ENCODE measurements at regions of chr11 and their contacts with region 1.

Region 1: GRCh38 chr11:128831174-128832120 is 35.6 kb downstream of the KCNJ1 start:
- DNase-seq: peak; percentile 83
- H3K4me3 ChIP-seq: peak overlapping the region in 1 of 4 donors; percentile 9
- H3K27ac ChIP-seq: peak overlapping the region in 1 of 4 donors; percentile 7
- H3K4me1 ChIP-seq: peaks cover 0 to 6% (median 0%) of the 10 kb centered on the region in 4 donors
- H3K27me3 ChIP-seq: no peaks in the 10 kb centered on the region
- CTCF ChIP-seq: peak; percentile 80 to 92 (median 89)
- EP300 ChIP-seq: no peak
- POLR2A ChIP-seq: no peak

Region 2: DNA sequence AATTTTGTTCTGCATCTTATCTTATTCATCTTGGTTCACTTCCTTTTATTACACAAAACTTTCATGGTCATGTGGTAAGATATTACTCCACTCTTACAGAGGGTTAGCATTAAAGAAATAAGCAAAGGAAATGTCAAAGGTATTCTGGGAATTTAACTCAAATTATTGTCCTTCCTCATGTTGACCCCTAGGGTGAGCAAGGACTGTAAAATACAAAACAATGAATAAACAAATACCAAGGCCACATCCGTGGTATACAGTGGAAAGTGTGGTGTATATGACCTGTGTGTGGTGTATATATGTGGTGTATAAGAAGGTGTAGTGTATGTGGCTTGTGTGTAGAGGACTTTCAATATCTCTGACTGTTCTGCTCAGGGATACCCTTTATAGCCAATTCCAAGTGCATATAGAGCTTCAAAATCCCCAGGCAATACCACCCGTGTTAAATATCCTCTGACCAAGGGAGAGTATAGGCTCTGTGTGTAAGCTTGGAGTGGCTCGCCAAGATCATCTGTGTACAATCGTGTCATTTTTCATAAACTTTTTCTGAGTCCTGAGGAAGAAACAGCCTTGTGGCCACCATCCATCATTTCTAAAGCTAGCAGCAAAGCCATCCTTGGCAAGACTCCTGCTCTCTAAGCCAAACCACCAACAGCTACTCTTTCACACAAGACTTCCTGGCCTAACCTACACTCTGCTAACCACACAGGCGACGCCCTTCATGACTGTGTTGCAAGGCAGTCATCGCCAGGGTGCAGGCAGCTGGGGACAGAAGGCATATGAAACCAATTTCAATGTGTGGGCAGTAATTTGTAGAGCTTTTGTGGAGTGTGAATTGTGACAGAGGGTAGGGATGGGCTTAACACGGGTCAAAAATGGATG is 792.1 kb before region 1 on chr11:
- in situ Hi-C with region 1: loop called (anchors 10 to 25 kb)
- intact Hi-C with region 1: no loop called
- DNase-seq: peak; percentile 48
- H3K4me3 ChIP-seq: no peak overlapping the region
- H3K27ac ChIP-seq: no peak overlapping the region
- H3K4me1 ChIP-seq: peaks cover 0 to 8% (median 2%) of the 10 kb centered on the region in 4 donors
- H3K27me3 ChIP-seq: no peaks in the 10 kb centered on the region
- CTCF ChIP-seq: no peak
- EP300 ChIP-seq: no peak
- POLR2A ChIP-seq: no peak

Region 3: GRCh38 chr11:128172046-128172878 is 659.2 kb before region 1 on chr11:
- in situ Hi-C with region 1: loop called (anchors 5 to 10 kb)
- intact Hi-C with region 1: loop called (anchors 5 kb)
- DNase-seq: peak; percentile 88
- H3K4me3 ChIP-seq: no peak overlapping the region
- H3K27ac ChIP-seq: no peak overlapping the region
- H3K4me1 ChIP-seq: peaks cover 0 to 3% (median 0%) of the 10 kb centered on the region in 4 donors
- H3K27me3 ChIP-seq: no peaks in the 10 kb centered on the region
- CTCF ChIP-seq: peak; percentile 71 to 91 (median 75)
- EP300 ChIP-seq: no peak
- POLR2A ChIP-seq: no peak

Region 4: GRCh38 chr11:128279866-128280265 is 551.6 kb before region 1 on chr11:
- in situ Hi-C with region 1: loop called in 3 of 4 experiments (anchors 25 kb)
- intact Hi-C with region 1: loop called (anchors 10 kb)
- DNase-seq: no peak
- H3K4me3 ChIP-seq: no peak overlapping the region
- H3K27ac ChIP-seq: no peak overlapping the region
- H3K4me1 ChIP-seq: no peaks in the 10 kb centered on the region
- H3K27me3 ChIP-seq: no peaks in the 10 kb centered on the region
- CTCF ChIP-seq: no peak
- EP300 ChIP-seq: no peak
- POLR2A ChIP-seq: no peak

Region 5: GRCh38 chr11:128630367-128631230 is 200.8 kb before region 1 on chr11:
- in situ Hi-C with region 1: loop called in 1 of 4 experiments (anchors 25 kb)
- intact Hi-C with region 1: loop called (anchors 10 kb)
- DNase-seq: peak; percentile 94
- H3K4me3 ChIP-seq: no peak overlapping the region
- H3K27ac ChIP-seq: peak overlapping the region; percentile 5 to 19 (median 12)
- H3K4me1 ChIP-seq: peaks cover 0 to 33% (median 10%) of the 10 kb centered on the region in 4 donors
- H3K27me3 ChIP-seq: no peaks in the 10 kb centered on the region
- CTCF ChIP-seq: peak; percentile 85 to 96 (median 89)
- EP300 ChIP-seq: no peak
- POLR2A ChIP-seq: no peak